ENCODE measurements at regions of chr7 and their contacts with region 1.

Region 1: DNA sequence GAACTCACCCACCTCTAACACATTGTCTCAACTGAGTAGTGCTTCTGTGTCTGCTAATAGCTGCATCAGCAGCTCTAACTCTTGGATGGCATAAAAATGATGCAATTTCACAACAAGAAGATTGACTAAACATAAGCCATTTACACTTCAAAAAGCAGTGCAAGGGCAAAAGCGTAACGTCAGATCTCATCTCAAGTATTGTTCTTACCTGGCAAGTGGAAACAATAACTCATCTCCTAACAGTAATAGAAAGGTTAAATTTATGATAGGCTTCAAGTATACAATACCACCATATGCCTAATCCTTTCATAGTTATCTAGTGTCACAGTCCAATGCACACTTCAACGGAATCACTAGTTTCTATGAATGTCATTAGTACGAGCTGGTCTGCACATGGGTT is 14.8 kb downstream of the TPK1 start:
- DNase-seq: no peak
- ATAC-seq: no peak
- H3K4me3 ChIP-seq: no peak overlapping the region
- H3K27ac ChIP-seq: no peak overlapping the region
- H3K4me1 ChIP-seq: peaks cover 0 to 5% of the 10 kb centered on the region in 2 donors
- H3K27me3 ChIP-seq: no peaks in the 10 kb centered on the region

Region 2: DNA sequence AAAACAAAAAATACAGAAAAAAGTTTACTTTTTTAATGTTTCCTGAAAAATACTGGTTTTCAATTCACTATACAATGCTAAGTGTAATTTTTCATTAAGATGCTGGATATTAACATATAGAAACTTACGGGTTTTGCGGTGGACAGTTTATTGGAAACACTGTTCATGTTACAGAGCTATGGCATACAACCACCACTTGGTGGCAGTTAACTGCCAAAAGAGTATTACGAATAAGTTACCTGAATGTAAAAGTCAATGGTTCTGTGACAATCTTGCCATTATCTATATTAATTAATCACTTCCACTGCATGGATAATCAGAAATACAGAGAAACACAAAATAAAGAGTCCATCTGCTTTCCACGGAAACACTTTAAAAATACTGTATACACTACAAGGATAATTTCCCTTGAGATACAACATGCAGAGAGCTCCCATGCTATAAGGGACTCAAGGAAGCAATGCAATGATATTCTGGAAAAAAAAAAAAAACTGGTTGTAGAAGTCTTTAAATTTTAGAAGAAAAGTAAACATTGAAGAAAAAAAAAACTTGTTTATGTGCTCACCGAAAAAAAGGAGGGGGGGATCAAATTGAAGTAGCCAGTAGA is 82.3 kb before region 1 on chr7:
- intact Hi-C with region 1: loop called in 1 of 2 experiments (anchors 10 kb)
- DNase-seq: no peak
- ATAC-seq: no peak
- H3K4me3 ChIP-seq: no peak overlapping the region
- H3K27ac ChIP-seq: no peak overlapping the region
- H3K4me1 ChIP-seq: no peaks in the 10 kb centered on the region
- H3K27me3 ChIP-seq: no peaks in the 10 kb centered on the region

Measured in aorta (tissue), 5 donors.